Activated CD4-positive, alpha-beta T cell treated with anti-CD3 and anti-CD28 coated beads for 36 hours (primary cell): ENCODE measurements at regions of chr11 and their contacts with region 1.

Region 1: GRCh38 chr11:125941619-125942611 is 3.9 kb upstream of the VSIG10L2 start:
- DNase-seq: peak; percentile 75
- ATAC-seq: peak; percentile 92
- H3K4me3 Mint-ChIP-seq: no peak overlapping the region
- H3K27ac Mint-ChIP-seq: no peak overlapping the region
- H3K4me1 Mint-ChIP-seq: peaks cover 10% of the 10 kb centered on the region
- H3K27me3 Mint-ChIP-seq: no peaks in the 10 kb centered on the region

Region 2: GRCh38 chr11:125995313-125995712 is 53.4 kb after region 1 on chr11:
- CTCF ChIA-PET with region 1: no interaction called
- POLR2A ChIA-PET with region 1: no interaction called
- intact Hi-C with region 1: no loop called
- DNase-seq: peak; percentile 79
- ATAC-seq: peak; percentile 91
- H3K4me3 Mint-ChIP-seq: no peak overlapping the region
- H3K27ac Mint-ChIP-seq: no peak overlapping the region
- H3K4me1 Mint-ChIP-seq: peaks cover 13% of the 10 kb centered on the region
- H3K27me3 Mint-ChIP-seq: no peaks in the 10 kb centered on the region

Region 3: DNA sequence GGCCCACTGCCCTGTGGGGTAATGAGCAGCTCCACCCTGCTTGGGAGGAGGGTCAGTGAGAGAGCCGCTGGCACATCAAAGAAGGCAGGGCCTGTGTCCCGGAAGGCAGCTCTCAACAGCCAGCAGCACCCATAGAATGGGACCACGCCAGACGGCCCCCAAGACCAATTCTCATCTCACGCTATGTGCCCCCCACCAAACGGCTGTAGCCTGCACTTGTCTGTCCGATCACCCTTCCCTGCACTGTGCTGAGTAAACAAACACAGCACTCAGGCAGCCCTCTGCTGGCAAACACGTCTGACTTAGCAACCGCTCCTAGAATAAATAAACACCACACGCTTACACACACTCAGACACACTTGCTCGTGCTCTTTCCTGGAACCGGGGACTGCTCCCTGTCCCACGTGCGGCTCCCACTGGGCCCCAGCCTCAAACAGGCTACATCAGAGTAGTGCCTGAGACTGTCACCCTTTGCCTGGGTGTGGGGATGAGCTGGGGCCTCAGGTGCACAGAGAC is 174.0 kb after region 1 on chr11:
- CTCF ChIA-PET with region 1: interaction called, 4 read pairs
- POLR2A ChIA-PET with region 1: no interaction called
- intact Hi-C with region 1: loop called in 1 of 2 experiments (anchors 5 kb)
- DNase-seq: no peak
- ATAC-seq: no peak
- H3K4me3 Mint-ChIP-seq: no peak overlapping the region
- H3K27ac Mint-ChIP-seq: no peak overlapping the region
- H3K4me1 Mint-ChIP-seq: no peaks in the 10 kb centered on the region
- H3K27me3 Mint-ChIP-seq: no peaks in the 10 kb centered on the region

Region 4: GRCh38 chr11:126194121-126194543 is 252.2 kb after region 1 on chr11:
- CTCF ChIA-PET with region 1: interaction called, 25 read pairs
- POLR2A ChIA-PET with region 1: no interaction called
- intact Hi-C with region 1: loop called (anchors 1 to 5 kb)
- DNase-seq: peak; percentile 63
- ATAC-seq: peak; percentile 42
- H3K4me3 Mint-ChIP-seq: no peak overlapping the region
- H3K27ac Mint-ChIP-seq: no peak overlapping the region
- H3K4me1 Mint-ChIP-seq: no peaks in the 10 kb centered on the region
- H3K27me3 Mint-ChIP-seq: no peaks in the 10 kb centered on the region

Region 5: DNA sequence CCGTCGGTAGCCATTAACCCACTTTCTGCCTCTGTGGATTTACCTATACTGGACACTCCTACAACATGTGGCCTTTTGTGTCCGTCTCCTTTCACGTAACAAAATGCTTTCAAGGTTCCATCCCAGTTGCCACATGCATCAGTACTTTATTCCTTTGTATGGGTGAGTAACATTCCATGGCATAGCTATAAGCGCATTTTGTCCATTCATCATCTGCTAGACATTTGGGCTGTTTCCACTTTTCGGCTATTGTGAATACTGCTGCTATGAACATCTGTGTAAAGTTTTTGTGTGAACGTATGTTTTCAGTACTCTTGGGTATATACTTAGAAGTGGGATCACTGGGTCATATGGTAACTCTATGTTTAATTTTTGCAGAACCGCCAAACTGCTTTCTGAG is 670.8 kb after region 1 on chr11:
- CTCF ChIA-PET with region 1: no interaction called
- POLR2A ChIA-PET with region 1: no interaction called
- intact Hi-C with region 1: no loop called
- DNase-seq: no peak
- ATAC-seq: no peak
- H3K4me3 Mint-ChIP-seq: no peak overlapping the region
- H3K27ac Mint-ChIP-seq: no peak overlapping the region
- H3K4me1 Mint-ChIP-seq: no peaks in the 10 kb centered on the region
- H3K27me3 Mint-ChIP-seq: peaks cover 4% of the 10 kb centered on the region